ENCODE measurements at regions of chr11 and their contacts with region 1.

Region 1: DNA sequence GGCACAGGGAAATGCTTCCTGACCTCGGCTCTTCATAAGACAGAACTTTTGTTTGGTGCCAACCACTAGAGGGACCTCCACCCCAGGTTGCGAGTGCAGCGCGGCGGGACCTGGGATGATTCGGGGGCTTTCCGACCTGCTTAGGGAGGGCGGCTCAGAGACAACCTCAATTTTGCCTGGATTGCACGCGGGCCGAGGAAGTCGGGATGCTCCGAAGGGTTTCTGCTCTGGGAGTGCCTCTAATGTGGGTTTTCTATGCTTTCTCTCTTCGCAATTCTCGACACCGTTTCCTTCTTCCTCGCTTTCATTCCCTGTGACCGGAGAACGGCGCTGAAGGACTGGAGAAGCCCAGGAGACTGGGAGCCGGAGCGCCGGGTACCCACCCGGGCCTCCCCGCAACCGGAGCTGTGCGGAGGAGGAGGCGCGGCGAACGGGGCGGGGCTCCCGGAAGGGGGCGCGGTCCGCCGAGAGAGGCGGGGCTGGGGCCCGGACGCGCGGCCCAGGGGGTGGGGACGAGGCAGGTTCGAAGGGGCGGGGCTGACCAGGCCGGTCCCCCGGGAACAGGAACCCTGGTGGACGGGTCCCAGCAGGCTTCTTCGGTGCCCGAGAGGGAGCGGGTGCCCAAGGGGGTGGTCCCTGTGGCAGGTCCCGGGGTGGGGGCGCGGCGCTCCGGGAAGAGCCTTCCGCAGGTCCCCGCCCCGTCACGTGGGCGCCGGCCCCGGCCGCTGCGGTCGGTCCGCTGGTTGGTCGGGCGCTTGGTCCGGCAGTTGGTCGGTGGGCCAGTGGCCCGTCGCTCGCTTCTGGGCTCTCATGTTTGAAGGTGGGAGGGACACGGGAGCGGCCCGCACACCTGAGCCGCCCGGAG is at the start of gene PPFIBP2:
- DNase-seq: peak; percentile 95 to 98 (median 96)
- ATAC-seq: peak; percentile 82 to 92 (median 86)
- H3K4me3 ChIP-seq: peak within 1 kb of the TSS; percentile 74 to 99 (median 92)
- H3K27ac ChIP-seq: peak within 1 kb of the TSS; percentile 80 to 92 (median 86)
- H3K4me1 ChIP-seq: peaks cover 0 to 41% (median 18%) of the 10 kb centered on the region in 4 donors
- H3K27me3 ChIP-seq: no peaks in the 10 kb centered on the region
- CTCF ChIP-seq: peak; percentile 65 to 75 (median 70)
- POLR2A ChIP-seq: peak; percentile 92
- total RNA-seq, gene PPFIBP2: 25.5 to 69.3 (median 46.6) TPM

Region 2: DNA sequence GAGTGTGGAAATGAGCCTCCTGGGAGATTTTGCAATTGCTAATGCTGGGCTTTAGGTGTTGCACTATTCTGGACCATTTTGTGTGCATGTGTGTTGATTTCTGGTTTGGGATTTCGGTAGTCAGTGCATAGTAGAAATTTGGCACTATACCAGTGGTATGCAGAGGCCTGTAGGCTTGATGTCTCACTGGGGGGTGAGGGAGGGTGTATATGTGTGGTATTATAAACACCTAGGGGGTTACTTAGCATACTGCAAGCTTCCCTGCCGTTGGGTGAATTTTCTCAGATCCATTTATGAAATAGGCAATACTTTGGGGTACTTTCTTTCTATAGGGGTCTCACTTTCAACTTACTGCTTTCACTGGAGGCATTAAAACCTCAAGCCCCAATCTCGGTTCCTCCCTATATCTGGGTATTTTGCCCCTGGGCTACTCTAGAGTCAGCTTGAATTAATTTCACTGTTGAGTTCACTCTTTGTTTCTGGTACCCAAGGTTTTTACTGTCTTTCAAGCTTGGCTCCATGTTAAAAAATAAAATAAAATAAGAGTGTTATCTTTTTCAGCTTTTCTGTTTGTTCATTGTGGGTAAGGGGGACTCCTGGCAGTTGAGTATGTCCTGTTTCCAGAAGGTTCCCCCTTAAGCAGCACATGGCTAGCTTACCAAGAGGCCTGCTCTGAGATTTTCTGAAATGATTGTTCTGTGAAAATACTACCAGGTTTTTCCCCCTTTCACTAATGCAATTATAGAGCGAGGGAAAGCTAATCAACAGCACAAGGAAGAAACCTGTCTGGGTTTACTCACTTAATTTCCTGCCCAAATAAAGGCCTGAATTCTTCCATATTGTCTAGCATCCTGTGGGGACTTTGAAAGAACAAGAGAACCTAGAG is 46.2 kb after region 1 on chr11:
- intact Hi-C with region 1: loop called in 1 of 2 experiments (anchors 10 kb)
- DNase-seq: no peak
- ATAC-seq: no peak
- H3K4me3 ChIP-seq: no peak overlapping the region
- H3K27ac ChIP-seq: no peak overlapping the region
- H3K4me1 ChIP-seq: peaks cover 0 to 7% (median 3%) of the 10 kb centered on the region in 4 donors
- H3K27me3 ChIP-seq: no peaks in the 10 kb centered on the region
- CTCF ChIP-seq: no peak
- POLR2A ChIP-seq: no peak

Measured in right lobe of liver (tissue), 6 donors.